Mucosa of descending colon (tissue), 3 donors: ENCODE measurements at regions of chr14 and their contacts with region 1.

Region 1: DNA sequence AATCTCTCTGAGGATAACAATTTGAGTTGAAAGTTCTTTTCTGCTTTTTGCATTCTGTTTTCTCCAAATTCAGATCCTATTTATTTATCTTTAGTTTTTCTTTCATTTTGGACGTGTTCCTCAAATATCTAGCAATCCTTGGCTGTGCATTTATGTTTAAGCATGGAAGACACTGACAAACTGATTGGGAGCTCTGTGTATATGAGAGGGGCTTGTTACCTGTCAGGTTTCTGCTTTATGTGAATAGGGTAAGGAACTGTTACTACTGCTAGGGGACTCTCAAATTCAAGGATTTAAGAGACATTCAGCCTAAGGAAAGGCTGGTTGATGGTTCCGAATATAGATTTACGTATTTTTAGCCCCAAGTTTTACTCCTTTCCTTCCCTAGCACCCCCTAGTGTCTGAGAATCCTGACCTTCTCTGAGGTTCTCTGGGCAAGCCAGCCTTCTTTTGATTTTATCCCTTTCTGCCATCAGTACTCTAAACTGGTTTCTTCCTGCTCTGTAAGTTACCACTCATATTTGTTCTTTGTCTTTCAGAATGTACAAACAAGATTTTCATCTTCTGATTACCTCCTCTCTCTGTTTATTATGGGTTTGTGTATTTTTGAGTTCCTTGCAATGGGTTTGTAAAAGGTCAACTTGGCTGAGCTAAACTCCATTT is 30.5 kb downstream of the YLPM1 start:
- DNase-seq: peak in 1 of 3 donors; percentile 9
- ATAC-seq: no peak
- H3K4me3 ChIP-seq: no peak overlapping the region
- H3K4me1 ChIP-seq: no peaks in the 10 kb centered on the region
- CTCF ChIP-seq: no peak

Region 2: GRCh38 chr14:74612350-74613021 is 181.2 kb before region 1 on chr14:
- intact Hi-C with region 1: loop called in 1 of 2 experiments (anchors 10 kb)
- DNase-seq: peak; percentile 82 to 84 (median 84)
- ATAC-seq: peak; percentile 92
- H3K4me3 ChIP-seq: no peak overlapping the region
- H3K4me1 ChIP-seq: peaks cover 9% of the 10 kb centered on the region
- CTCF ChIP-seq: peak; percentile 83